AG04450 (cell line): ENCODE measurements at regions of chr1 and their contacts with region 1.

Region 1: GRCh38 chr1:210407207-210407886 is 78.6 kb downstream of the HHAT start:
- DNase-seq: peak; percentile 42
- H3K4me3 ChIP-seq: no peak overlapping the region
- H3K27ac ChIP-seq: no peak overlapping the region
- H3K27me3 ChIP-seq: no peaks in the 10 kb centered on the region
- CTCF ChIP-seq: peak; percentile 98

Region 2: DNA sequence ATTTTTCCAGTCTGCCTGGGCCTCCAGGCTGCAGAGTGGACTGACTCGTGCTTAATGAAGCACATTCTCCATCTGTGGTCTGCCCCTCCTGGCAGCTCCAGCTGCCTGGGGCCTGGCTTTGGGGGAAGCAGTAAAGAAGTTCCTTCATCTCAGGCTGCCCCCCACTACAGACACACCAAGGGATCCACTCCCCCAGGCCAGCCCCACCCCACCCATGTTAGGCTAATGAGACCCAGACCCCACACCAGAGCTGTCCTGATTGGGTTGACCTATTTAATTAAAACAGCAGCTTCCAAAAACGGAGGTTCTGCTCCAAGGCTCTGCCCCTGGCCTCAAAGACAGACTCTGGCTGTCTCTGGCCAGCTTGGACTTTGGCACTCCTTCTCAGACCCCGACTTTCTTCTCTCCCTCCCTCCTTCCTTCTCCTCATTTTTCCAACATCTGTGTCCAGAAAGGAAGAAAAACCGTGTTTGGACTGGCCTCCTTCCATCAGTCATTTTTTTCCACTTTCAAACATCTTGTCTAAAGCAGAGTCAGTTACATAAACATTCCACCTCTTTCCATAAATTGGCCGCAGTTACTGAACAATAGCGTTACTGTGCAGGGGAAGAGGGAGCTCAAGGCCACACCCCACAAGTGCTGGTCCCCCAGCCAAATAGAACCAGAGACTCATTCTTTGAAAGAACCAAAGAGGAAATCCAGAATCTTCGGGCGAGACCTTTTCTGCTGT is 145.0 kb before region 1 on chr1:
- CTCF ChIA-PET with region 1: no interaction called
- POLR2A ChIA-PET with region 1: no interaction called
- DNase-seq: peak; percentile 58
- H3K4me3 ChIP-seq: no peak overlapping the region
- H3K27ac ChIP-seq: peak overlapping the region; percentile 47
- H3K27me3 ChIP-seq: peaks cover 3% of the 10 kb centered on the region
- CTCF ChIP-seq: no peak

Region 3: GRCh38 chr1:210311726-210312493 is 95.4 kb before region 1 on chr1:
- CTCF ChIA-PET with region 1: no interaction called
- POLR2A ChIA-PET with region 1: no interaction called
- DNase-seq: no peak
- H3K4me3 ChIP-seq: no peak overlapping the region; the same call in 1 of the 2 replicates
- H3K27ac ChIP-seq: no peak overlapping the region
- H3K27me3 ChIP-seq: peaks cover 14% of the 10 kb centered on the region
- CTCF ChIP-seq: no peak

Region 4: GRCh38 chr1:210373885-210374599 is 33.3 kb before region 1 on chr1:
- CTCF ChIA-PET with region 1: interaction called, 28 read pairs
- POLR2A ChIA-PET with region 1: interaction called, 4 read pairs
- DNase-seq: peak; percentile 83
- H3K4me3 ChIP-seq: no peak overlapping the region
- H3K27ac ChIP-seq: peak overlapping the region; percentile 59
- H3K27me3 ChIP-seq: no peaks in the 10 kb centered on the region
- CTCF ChIP-seq: peak; percentile 96

Region 5: DNA sequence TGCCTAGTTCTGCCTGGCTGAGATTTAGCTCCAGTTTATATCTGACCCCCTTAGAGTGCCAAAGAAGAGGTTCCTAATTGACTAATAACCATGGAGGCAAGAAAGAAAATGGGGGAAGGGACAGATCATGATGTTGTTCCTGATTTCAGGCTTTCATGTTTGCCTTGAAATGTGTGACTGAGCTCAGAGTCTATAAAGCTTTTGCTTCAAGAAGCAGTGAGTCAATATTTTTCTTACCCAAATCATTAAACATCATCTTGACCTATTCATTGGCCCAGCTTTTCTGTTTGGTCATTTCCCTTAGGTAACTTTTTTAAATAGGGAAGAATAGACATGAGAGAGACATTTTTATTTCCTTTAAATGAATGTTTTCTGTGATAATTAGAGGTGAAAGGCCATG is 22.7 kb before region 1 on chr1:
- CTCF ChIA-PET with region 1: interaction called, 19 read pairs
- POLR2A ChIA-PET with region 1: no interaction called
- DNase-seq: no peak
- H3K4me3 ChIP-seq: no peak overlapping the region
- H3K27ac ChIP-seq: no peak overlapping the region
- H3K27me3 ChIP-seq: no peaks in the 10 kb centered on the region
- CTCF ChIP-seq: no peak

Region 6: DNA sequence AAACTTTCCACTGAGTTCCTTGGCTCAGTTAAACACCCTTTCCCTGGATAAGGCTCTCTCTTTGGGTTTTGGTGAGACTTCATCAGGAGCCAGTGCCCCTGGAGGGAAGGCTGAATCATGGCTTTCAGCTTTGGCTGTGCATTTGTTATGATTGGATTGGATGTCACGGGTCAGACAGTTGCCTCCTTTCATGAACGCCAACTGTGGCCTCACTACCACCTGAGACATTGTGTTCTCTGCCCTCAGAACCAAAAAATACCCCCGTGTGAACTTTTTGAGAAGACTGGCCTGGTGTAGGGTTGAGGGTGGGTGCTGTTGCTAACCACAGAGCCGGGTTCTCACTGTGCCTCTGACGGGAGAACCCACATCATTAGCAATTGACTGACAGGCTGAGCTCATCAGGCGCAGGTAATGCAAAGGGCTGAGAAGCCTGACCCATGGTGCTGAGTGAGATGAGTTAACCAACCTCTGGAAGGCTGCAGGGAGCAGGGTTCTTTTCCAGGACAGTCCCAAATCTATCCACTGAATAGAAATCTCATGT is 13.0 kb before region 1 on chr1:
- CTCF ChIA-PET with region 1: interaction called, 13 read pairs
- POLR2A ChIA-PET with region 1: no interaction called
- DNase-seq: no peak
- H3K4me3 ChIP-seq: no peak overlapping the region
- H3K27ac ChIP-seq: no peak overlapping the region
- H3K27me3 ChIP-seq: no peaks in the 10 kb centered on the region
- CTCF ChIP-seq: no peak

Region 7: GRCh38 chr1:210438928-210439809 is 31.8 kb after region 1 on chr1:
- CTCF ChIA-PET with region 1: interaction called, 11 read pairs
- POLR2A ChIA-PET with region 1: interaction called, 3 read pairs
- DNase-seq: peak; percentile 94
- H3K4me3 ChIP-seq: no peak overlapping the region
- H3K27ac ChIP-seq: peak overlapping the region; percentile 92
- H3K27me3 ChIP-seq: no peaks in the 10 kb centered on the region
- CTCF ChIP-seq: no peak

Region 8: GRCh38 chr1:210448297-210448892 is 41.0 kb after region 1 on chr1:
- CTCF ChIA-PET with region 1: interaction called, 87 read pairs
- POLR2A ChIA-PET with region 1: no interaction called
- DNase-seq: peak; percentile 30
- H3K4me3 ChIP-seq: no peak overlapping the region
- H3K27ac ChIP-seq: no peak overlapping the region
- H3K27me3 ChIP-seq: no peaks in the 10 kb centered on the region
- CTCF ChIP-seq: peak; percentile 75

Region 9: DNA sequence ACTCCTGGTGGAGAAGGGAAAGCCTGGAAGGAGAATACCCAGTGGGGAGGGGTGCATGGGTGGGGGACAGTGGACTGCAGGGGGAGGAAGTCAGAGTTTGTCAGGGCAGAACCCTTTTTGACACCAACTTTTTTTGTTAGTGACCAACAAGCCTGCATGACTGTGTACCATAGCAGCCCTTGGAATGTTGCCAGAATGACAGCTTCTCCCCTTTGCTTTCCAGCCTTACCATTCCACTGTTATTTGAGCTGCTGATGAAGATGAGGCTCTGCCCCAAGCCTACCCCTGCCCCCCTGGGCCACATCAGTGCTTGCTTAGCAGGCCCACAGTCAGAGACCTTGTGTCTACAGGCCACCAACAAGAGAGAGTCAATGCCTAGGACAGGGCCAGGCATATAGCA is 262.6 kb after region 1 on chr1:
- CTCF ChIA-PET with region 1: no interaction called
- POLR2A ChIA-PET with region 1: no interaction called
- DNase-seq: no peak
- H3K4me3 ChIP-seq: no peak overlapping the region
- H3K27ac ChIP-seq: no peak overlapping the region
- H3K27me3 ChIP-seq: no peaks in the 10 kb centered on the region
- CTCF ChIP-seq: no peak